CD8-positive, alpha-beta T cell (primary cell): ENCODE measurements at regions of chr1 and their contacts with region 1.

Region 1: GRCh38 chr1:157963713-157964112 is 29.7 kb upstream of the KIRREL1 start:
- DNase-seq: peak; percentile 2 to 69 (median 44)
- ATAC-seq: peak; percentile 40
- H3K4me3 ChIP-seq: no peak overlapping the region
- H3K4me3 Mint-ChIP-seq: no peak overlapping the region
- H3K27ac ChIP-seq: no peak overlapping the region
- H3K27ac Mint-ChIP-seq: no peak overlapping the region
- H3K4me1 ChIP-seq: no peaks in the 10 kb centered on the region
- H3K4me1 Mint-ChIP-seq: no peaks in the 10 kb centered on the region
- H3K27me3 ChIP-seq: peaks cover 2% of the 10 kb centered on the region in 2 experiments
- H3K27me3 Mint-ChIP-seq: peaks cover 27% of the 10 kb centered on the region
- CTCF ChIP-seq: peak; percentile 68

Region 2: GRCh38 chr1:158055854-158056253 is 92.1 kb after region 1 on chr1:
- CTCF ChIA-PET with region 1: no interaction called
- POLR2A ChIA-PET with region 1: no interaction called
- intact Hi-C with region 1: no loop called
- DNase-seq: no peak
- ATAC-seq: no peak
- H3K4me3 ChIP-seq: no peak overlapping the region
- H3K4me3 Mint-ChIP-seq: no peak overlapping the region
- H3K27ac ChIP-seq: no peak overlapping the region
- H3K27ac Mint-ChIP-seq: no peak overlapping the region
- H3K4me1 ChIP-seq: no peaks in the 10 kb centered on the region
- H3K4me1 Mint-ChIP-seq: no peaks in the 10 kb centered on the region
- H3K27me3 ChIP-seq: no peaks in the 10 kb centered on the region
- H3K27me3 Mint-ChIP-seq: peaks cover 8% of the 10 kb centered on the region
- CTCF ChIP-seq: no peak

Region 3: DNA sequence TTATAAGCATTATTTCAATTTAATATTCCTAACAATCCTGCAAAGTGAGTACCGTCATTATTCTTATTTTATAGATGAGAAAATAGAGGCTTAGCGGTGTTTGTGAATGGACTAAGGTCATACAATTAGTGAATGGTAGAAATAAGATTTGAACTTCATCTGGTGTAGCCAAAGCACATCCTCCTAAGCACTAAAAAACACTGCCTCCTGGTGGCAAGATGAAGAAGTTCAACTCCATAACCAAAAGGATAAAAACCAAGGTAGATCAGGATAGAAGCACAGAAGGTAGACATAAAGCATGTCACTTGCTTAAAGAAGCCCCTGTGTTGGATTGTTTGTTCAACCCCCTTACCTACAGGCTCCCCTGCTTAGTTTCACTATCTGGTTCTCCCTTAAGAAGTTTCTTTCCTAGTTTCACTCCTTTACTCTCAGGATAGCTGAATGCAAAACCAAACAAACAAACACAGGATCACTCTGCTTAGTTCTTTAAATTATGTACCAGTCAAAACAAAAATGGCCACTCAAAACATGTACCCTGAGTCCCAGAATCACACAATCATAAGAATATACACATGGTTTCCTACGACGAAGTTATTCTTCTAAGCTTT is 1125.6 kb after region 1 on chr1:
- CTCF ChIA-PET with region 1: no interaction called
- POLR2A ChIA-PET with region 1: no interaction called
- intact Hi-C with region 1: loop called in 1 of 2 experiments (anchors 5 kb)
- DNase-seq: peak in 3 of 9 experiments; percentile 15 to 66 (median 57)
- ATAC-seq: peak; percentile 54
- H3K4me3 ChIP-seq: no peak overlapping the region
- H3K4me3 Mint-ChIP-seq: no peak overlapping the region
- H3K27ac ChIP-seq: no peak overlapping the region
- H3K27ac Mint-ChIP-seq: no peak overlapping the region
- H3K4me1 ChIP-seq: no peaks in the 10 kb centered on the region
- H3K4me1 Mint-ChIP-seq: peaks cover 3% of the 10 kb centered on the region
- H3K27me3 ChIP-seq: no peaks in the 10 kb centered on the region
- H3K27me3 Mint-ChIP-seq: no peaks in the 10 kb centered on the region
- CTCF ChIP-seq: peak; percentile 74